ENCODE measurements at regions of chr15 and their contacts with region 1.

Region 1: DNA sequence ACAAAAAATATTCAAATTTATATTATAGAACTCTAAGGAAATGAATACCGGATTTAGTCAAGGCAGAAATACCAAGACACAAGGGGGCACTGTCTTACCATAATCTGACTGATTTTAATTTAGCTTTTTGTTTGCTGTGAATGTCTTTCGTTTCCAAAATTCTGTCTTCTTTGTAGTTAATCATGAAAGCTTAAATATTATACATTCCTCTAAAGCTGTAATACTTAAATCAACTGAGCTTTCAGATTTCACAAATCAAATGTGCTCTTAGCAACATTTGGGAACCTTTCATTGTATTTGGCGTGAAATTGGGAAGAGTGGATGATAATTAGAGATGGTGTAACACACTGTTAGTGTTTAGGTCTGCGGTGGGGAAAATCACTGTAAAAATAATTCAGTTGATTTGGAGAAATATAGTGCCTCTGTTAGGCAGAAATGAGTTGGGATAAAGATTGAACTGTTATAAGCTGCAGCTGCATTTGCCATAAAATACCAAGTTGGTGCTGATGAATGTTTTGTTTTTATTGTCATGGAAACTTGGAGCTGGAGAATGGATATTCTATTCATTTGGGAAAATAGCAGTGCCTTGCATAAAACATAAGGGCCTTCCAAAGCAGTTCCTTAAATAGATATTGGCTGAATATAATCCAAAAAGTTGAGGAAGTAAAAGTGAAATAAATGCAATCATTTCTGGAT is 228.2 kb downstream of the TCF12 start:
- DNase-seq: no peak
- ATAC-seq: peak; percentile 70
- H3K4me3 ChIP-seq: peak overlapping the region in 1 of 2 donors; percentile 72
- H3K27ac ChIP-seq: no peak overlapping the region
- H3K4me1 ChIP-seq: peaks cover 5 to 12% of the 10 kb centered on the region in 2 donors
- H3K27me3 ChIP-seq: no peaks in the 10 kb centered on the region

Region 2: DNA sequence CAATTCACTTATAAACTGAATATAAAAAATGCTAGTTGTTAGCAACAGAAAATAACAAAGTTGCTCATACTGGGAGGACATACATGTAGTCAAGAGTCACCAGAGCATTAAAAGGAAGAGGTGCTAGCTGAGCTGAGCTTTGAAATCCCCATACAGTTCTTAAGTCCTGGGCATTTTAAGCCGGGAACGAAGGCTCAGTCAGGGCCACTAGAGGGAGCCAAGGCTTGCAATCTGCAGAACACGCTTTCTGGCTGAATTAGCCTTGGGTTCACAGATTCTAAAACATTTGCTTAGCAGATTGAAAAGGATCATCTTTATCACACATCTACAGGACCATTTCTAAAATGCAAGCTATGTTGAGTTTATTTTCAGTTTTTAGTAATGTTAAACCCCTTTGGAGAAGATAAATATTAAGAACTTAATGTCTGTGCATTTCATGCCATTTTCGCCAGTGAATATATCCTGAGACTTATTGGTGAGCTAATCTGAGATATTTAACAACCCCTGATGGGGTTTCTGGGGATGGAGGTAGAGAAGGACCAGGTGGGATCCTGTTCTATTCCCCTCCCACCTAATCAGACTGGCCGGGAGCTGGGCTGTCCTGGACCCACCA is 655.4 kb before region 1 on chr15:
- intact Hi-C with region 1: loop called in 1 of 2 experiments (anchors 10 kb)
- DNase-seq: peak; percentile 74 to 78
- ATAC-seq: no peak
- H3K4me3 ChIP-seq: no peak overlapping the region
- H3K27ac ChIP-seq: no peak overlapping the region
- H3K4me1 ChIP-seq: no peaks in the 10 kb centered on the region
- H3K27me3 ChIP-seq: no peaks in the 10 kb centered on the region

Region 3: GRCh38 chr15:56918046-56918938 is 228.4 kb before region 1 on chr15 and contains the start of gene TCF12:
- intact Hi-C with region 1: loop called in 1 of 2 experiments (anchors 10 kb)
- DNase-seq: peak; percentile 97 to 99
- ATAC-seq: peak; percentile 97
- H3K4me3 ChIP-seq: peak within 1 kb of the TSS; percentile 90 to 92
- H3K27ac ChIP-seq: peak within 1 kb of the TSS; percentile 20 to 91
- H3K4me1 ChIP-seq: peaks cover 0 to 8% of the 10 kb centered on the region in 2 donors
- H3K27me3 ChIP-seq: no peaks in the 10 kb centered on the region
- total RNA-seq, gene TCF12: 102 to 158 TPM

Region 4: DNA sequence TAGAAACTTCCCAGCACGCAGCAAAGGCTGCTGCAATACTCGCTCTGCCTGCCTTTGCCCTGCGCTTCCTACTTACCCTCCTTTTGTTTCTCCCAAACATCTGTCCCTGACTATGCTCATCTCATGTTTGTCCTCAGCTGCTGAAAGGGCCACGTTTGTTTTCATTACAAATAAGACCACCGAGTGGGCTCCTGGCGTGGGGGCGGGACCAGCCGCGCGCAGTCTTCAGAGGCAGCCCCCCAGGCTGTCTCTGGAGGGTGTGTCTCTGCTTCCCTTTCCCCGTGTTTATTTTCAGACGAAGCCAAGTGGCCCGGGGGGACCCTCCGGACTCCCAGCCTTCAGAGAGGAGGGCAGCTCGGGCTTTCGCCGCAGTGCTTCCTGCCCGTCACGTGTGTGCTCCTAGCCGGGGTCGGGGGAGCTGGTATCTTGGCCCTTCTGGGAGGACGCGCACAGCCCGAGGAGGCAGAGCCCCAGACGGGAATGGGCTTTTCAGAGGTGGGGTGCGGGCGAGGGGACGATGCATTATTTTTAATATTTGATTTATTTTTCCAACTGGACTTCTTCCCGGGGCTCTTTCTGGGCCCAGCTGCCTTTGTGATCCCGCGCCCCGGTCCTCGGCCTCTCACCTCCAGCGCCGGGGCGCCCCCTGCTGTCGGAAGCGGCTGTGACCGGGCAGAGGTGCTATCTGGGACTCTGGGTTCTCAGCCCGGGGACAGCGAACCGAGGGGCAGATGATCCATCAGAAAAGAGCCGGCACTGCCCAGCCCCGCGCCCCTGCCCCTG is 159.7 kb after region 1 on chr15:
- intact Hi-C with region 1: loop called (anchors 1 to 5 kb)
- DNase-seq: peak; percentile 91 to 96
- ATAC-seq: peak; percentile 90
- H3K4me3 ChIP-seq: peak overlapping the region in 1 of 2 donors; percentile 23
- H3K27ac ChIP-seq: no peak overlapping the region
- H3K4me1 ChIP-seq: no peaks in the 10 kb centered on the region
- H3K27me3 ChIP-seq: no peaks in the 10 kb centered on the region

Region 5: GRCh38 chr15:57541805-57542504 is 395.3 kb after region 1 on chr15:
- intact Hi-C with region 1: loop called in 1 of 2 experiments (anchors 10 kb)
- DNase-seq: peak; percentile 80 to 89
- ATAC-seq: peak; percentile 74
- H3K4me3 ChIP-seq: no peak overlapping the region
- H3K27ac ChIP-seq: no peak overlapping the region
- H3K4me1 ChIP-seq: peaks cover 1 to 3% of the 10 kb centered on the region in 2 donors
- H3K27me3 ChIP-seq: no peaks in the 10 kb centered on the region

Measured in aorta (tissue), 5 donors.